AG04450 (cell line): ENCODE measurements at regions of chrX and their contacts with region 1.

Region 1: DNA sequence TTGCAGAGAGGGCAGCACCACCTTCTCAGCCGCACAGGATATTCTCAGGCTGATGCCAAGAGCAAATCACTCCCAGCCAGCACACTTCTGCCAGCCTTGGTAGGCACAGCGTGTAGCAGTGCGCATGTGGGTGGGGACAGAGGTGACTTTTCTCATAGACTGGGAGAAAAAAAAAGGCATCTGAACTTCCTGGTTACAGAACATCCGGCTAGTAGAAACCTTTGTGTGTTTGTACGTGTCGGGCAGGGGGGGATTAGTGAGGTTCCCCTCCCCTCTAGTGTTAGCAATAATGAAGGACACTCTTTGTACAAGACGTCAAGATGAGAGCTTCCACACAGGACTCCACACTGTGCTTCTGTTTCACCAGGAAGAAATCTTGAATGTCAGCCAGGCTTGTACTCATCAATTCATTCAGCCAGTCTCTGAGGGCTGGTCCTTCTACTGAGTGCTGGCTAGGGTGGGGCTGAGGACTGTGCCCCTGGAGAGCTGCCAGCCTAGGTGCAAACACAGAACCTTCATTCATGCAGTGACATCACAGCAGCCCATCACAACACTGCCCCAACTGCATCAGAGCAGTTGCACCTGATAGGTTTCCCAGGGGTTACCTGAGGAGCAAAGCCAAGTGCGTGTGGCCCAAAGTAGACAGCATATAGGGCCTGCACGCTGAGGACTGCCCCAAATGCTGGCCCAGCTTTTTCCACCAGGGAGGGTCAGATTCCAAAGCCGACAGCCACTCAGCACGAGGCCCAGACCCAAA is 34.7 kb downstream of the SLC25A5 start:
- DNase-seq: no peak
- H3K4me3 ChIP-seq: no peak overlapping the region
- H3K27ac ChIP-seq: peak overlapping the region; percentile 77
- H3K27me3 ChIP-seq: no peaks in the 10 kb centered on the region
- CTCF ChIP-seq: no peak

Region 2: DNA sequence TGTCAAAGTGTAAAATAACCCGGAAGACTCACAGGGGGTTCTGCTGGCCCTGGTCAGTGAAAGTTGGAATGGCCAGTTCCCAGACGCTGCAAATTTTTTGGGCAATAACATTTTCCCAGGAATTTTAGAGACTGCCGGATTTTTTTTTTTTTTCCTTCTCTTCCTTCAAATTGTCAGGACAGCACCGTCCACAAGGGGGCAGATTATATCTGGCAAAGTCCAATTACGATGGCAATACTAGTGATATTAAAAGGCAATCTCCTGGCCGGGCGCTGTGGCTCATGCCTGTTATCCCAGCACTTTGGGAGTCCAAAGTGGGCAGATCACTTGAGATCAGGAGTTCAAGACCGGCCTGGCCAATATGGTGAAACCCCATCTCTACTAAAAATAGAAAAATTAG is 14.2 kb before region 1 on chrX:
- CTCF ChIA-PET with region 1: interaction called, 16 read pairs
- POLR2A ChIA-PET with region 1: interaction called, 5 read pairs
- DNase-seq: no peak
- H3K4me3 ChIP-seq: no peak overlapping the region
- H3K27ac ChIP-seq: no peak overlapping the region
- H3K27me3 ChIP-seq: no peaks in the 10 kb centered on the region
- CTCF ChIP-seq: peak; percentile 59

Region 3: GRCh38 chrX:119667111-119667878 is 164.4 kb after region 1 on chrX:
- CTCF ChIA-PET with region 1: no interaction called
- POLR2A ChIA-PET with region 1: no interaction called
- DNase-seq: no peak
- H3K4me3 ChIP-seq: no peak overlapping the region
- H3K27ac ChIP-seq: no peak overlapping the region
- H3K27me3 ChIP-seq: no peaks in the 10 kb centered on the region
- CTCF ChIP-seq: no peak